AG04449 (cell line): ENCODE measurements at regions of chr19 and their contacts with region 1.

Region 1: GRCh38 chr19:19404879-19405860 is at the start of gene GATAD2A:
- DNase-seq: no peak
- H3K4me3 ChIP-seq: peak within 1 kb of the TSS; percentile 75
- CTCF ChIP-seq: peak; percentile 48

Region 2: DNA sequence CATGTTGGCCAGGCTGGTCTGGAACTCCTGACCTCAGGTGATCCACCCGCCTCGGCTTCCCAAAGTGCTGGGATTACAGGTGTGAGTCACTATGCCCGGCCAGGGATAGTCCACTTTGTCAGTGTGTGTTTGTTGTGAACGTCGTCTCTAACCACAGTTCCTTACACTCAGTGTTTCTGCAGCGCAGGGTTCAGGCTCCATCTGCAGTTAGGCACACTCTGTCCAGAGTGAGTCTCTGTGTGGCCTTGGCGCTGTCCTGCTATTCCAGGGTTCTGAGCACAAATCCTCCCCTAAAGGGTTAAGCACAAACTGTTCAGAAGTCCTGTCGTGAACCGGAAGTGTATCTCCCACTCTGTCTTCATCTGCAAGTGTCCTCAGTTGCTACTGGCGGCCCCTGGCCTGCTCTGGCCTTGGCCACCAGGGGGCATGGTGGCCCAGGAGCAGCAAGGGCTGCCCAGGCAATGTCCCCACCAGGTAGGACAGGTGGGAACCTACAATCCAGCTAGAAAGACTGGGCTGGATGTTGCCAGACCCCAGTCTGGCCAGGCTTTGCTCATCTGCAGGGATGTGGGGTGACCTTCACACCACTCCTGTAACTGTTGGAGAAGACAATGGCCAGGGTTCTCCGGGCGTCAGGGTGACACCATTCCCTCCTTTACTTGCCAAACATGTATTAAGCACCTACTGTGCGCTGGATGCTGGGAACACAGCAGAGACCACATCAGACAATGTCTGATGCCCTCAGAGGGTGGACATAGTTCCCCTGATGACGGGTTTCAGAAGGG is 38.4 kb before region 1 on chr19:
- CTCF ChIA-PET with region 1: interaction called, 11 read pairs
- POLR2A ChIA-PET with region 1: no interaction called
- DNase-seq: no peak
- H3K4me3 ChIP-seq: no peak overlapping the region
- CTCF ChIP-seq: peak; percentile 90

Region 3: GRCh38 chr19:19379279-19379926 is 25.8 kb before region 1 on chr19:
- CTCF ChIA-PET with region 1: no interaction called
- POLR2A ChIA-PET with region 1: no interaction called
- DNase-seq: no peak
- H3K4me3 ChIP-seq: no peak overlapping the region
- CTCF ChIP-seq: no peak

Region 4: DNA sequence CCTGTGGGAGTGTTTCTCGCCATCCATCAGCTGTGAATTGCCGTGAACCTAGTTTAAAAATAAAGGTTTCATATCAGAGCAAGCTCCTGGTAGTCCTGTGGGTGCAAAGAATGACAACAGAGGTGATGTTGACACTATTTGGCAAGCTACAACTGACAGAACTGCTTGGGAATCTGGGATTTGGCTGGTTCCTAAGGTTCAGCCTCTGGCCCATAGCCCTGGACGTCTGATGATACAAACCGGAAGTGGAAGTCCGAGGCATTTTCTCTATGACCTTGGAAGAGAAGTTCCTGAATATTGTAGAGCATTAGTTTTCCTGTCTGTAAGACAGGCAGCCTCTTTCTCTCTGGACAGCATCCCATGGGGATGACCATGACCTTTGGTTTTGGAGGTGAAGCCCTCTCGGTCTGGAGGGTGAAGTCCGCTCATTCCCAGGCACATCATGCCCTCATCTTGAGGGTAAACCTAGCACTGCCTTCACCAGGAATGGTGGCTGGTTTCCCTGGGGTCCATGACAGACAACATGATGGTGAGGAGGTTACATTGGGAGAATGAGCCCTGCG is 29.4 kb after region 1 on chr19:
- CTCF ChIA-PET with region 1: no interaction called
- POLR2A ChIA-PET with region 1: no interaction called
- DNase-seq: no peak
- H3K4me3 ChIP-seq: no peak overlapping the region
- CTCF ChIP-seq: no peak